Activated T-helper 1 cell treated with anti-CD3 and anti-CD28 coated beads, Interleukin-12 subunit alpha, Interleukin-12 subunit beta, Interleukin-2, Interleukin-4 antibody, amounts not matched to agents 30 ng/mL and 10 ng/mL and 1 ng/mL, durations not matched to agents 14 hours and 24 hours and 36 hours (primary cell): ENCODE measurements at regions of chr9 and their contacts with region 1.

Region 1: GRCh38 chr9:96661711-96662110 is 6.6 kb upstream of the PRXL2C start:
- DNase-seq: no peak
- H3K4me3 Mint-ChIP-seq: no peak overlapping the region
- H3K27ac Mint-ChIP-seq: no peak overlapping the region
- H3K4me1 Mint-ChIP-seq: no peaks in the 10 kb centered on the region
- H3K27me3 Mint-ChIP-seq: peaks cover 16% of the 10 kb centered on the region

Region 2: DNA sequence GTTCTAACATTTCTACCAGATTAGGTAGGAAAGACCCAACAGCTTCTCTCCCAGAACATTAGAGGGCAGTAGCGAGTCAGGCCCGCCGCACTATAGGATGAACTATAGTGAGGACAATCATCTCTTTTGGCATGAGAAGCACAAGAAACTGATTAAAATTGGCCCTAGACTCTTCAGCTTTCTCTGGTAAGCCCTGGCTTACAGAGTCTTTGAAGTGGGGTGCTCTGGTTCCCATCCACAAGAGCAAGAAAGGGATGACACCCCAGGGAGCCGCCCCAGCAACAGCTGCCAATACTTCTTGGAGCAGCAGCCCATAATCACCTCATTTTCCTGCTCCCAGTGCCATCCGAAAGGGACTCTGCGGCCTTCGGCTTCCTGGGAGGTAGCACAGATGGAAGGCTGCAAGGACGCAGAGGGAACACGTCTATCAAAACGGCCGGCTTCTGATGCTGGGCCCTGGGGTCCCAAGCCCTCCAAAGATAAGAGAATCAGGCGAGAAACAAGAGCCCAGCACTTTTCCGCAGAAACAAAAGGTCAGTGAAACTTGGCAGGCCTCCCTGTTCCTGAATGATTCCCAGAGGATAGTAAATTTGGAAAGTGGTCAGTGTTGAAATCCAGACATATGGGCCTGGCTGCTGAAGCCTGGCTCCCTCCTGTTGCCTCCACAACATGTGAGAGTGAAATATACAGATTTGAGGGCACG is 429.0 kb before region 1 on chr9:
- intact Hi-C with region 1: loop called (anchors 10 kb)
- DNase-seq: no peak
- H3K4me3 Mint-ChIP-seq: no peak overlapping the region
- H3K27ac Mint-ChIP-seq: no peak overlapping the region
- H3K4me1 Mint-ChIP-seq: no peaks in the 10 kb centered on the region
- H3K27me3 Mint-ChIP-seq: peaks cover 44% of the 10 kb centered on the region